Gastrocnemius medialis (tissue), 4 donors: ENCODE measurements at regions of chr7 and their contacts with region 1.

Region 1: DNA sequence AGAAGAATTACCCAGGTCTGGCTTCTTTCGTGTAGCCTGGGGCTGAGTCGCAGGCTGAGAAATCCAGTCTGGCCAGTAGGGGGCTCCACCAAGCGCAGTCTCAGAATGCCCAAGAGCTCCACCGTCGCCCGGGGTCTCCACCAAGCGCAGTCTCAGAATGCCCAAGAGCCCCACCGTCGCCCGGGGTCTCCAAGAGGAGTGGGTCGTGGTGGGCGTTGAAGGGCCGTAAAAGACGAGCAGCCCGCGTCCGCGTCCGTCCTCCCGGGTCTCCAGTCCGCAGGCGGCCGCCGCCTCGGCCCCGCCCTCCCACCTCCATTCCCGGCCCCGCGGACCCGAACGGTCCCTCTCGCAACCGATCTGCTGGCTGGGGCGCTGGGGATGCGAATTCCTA is 895 bp upstream of the ZYX start:
- DNase-seq: peak; percentile 66 to 82
- ATAC-seq: peak; percentile 60 to 63
- H3K4me3 ChIP-seq: peak overlapping the region; percentile 78 to 99 (median 86)
- H3K27ac ChIP-seq: peak overlapping the region; percentile 92 to 100 (median 98)
- H3K4me1 ChIP-seq: peaks cover 44 to 47% of the 10 kb centered on the region in 2 donors
- H3K27me3 ChIP-seq: no peaks in the 10 kb centered on the region
- CTCF ChIP-seq: peak; percentile 89 to 95 (median 91)
- POLR2A ChIP-seq: no peak

Region 2: DNA sequence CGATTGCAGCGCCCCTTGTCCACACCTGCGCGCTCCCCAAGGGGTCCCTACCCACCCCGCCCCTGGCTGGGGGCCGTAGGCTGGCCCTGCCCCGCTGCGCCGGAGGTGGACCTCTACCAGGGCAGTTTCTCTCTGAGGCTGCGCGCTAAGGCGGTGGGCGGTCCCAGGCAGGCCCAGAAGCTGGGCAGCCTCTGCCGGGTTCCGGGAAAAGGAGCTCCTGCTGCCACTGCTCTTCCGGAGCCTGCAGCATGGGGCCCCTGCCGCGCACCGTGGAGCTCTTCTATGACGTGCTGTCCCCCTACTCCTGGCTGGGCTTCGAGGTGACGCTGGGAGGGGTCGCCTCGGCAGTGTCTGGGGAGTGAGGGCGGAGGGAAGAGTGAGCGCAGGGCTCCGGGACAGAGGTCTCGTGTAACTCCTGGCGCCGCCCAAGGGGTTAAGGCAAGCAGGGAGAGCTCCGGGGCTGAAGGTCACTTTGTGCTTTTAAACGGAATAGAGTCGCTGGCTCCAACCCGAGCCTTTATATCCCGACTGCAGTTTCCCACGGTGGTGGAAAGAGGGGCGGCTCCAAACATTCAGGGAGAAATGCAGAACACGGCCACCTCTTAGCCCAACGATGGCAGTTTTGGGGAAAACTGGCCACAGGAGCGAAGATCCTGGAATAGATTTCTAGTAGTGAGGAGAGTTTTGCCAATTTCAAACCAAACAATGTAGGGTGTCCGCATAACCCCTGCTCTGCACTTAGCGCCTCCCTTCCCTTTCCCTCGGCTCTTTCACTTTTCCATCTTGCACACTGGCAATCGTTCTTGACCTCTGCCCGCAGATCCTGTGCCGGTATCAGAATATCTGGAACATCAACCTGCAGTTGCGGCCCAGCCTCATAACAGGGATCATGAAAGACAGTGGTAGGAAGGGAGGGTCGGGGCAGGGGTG is 116.7 kb before region 1 on chr7 and contains the start of gene GSTK1:
- in situ Hi-C with region 1: no loop called
- intact Hi-C with region 1: loop called (anchors 2 kb)
- DNase-seq: peak; percentile 61 to 68
- ATAC-seq: peak; percentile 91 to 92
- H3K4me3 ChIP-seq: peak within 1 kb of the TSS; percentile 74 to 96 (median 82)
- H3K27ac ChIP-seq: peak within 1 kb of the TSS; percentile 80 to 88 (median 87)
- H3K4me1 ChIP-seq: peaks cover 10 to 27% of the 10 kb centered on the region in 2 donors
- H3K27me3 ChIP-seq: no peaks in the 10 kb centered on the region
- CTCF ChIP-seq: no peak
- POLR2A ChIP-seq: peak; percentile 46 to 59
- total RNA-seq, gene GSTK1: 59.5 to 114 (median 85.0) TPM

Region 3: DNA sequence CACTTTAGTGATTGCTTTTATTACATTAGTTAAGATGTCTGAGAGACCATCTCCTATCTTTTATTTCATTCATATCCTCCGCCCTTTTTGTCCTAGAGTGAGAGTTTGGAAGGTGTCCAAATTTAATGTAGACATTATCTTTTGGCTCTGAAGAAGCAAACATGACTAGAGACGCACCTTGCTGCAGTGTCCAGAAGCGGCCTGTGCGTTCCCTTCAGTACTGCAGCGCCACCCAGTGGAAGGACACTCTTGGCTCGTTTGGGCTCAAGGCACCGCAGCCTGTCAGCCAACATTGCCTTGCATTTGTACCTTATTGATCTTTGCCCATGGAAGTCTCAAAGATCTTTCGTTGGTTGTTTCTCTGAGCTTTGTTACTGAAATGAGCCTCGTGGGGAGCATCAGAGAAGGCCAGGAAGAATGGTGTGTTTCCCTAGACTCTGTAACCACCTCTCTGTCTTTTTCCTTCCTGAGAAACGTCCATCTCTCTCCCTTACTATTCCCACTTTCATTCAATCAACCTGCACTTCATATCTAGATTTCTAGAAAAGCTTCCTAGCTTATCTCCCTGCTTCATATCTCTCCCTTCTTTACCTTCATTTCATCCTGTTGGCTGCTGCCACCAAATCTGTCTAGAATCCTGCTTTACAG is 74.7 kb before region 1 on chr7:
- in situ Hi-C with region 1: no loop called
- intact Hi-C with region 1: no loop called
- DNase-seq: peak in 1 of 2 donors; percentile 55
- ATAC-seq: peak; percentile 26 to 84
- H3K4me3 ChIP-seq: no peak overlapping the region
- H3K27ac ChIP-seq: no peak overlapping the region
- H3K4me1 ChIP-seq: peaks cover 15% of the 10 kb centered on the region in 2 donors
- H3K27me3 ChIP-seq: no peaks in the 10 kb centered on the region
- CTCF ChIP-seq: peak; percentile 54 to 74 (median 62)
- POLR2A ChIP-seq: no peak

Region 4: DNA sequence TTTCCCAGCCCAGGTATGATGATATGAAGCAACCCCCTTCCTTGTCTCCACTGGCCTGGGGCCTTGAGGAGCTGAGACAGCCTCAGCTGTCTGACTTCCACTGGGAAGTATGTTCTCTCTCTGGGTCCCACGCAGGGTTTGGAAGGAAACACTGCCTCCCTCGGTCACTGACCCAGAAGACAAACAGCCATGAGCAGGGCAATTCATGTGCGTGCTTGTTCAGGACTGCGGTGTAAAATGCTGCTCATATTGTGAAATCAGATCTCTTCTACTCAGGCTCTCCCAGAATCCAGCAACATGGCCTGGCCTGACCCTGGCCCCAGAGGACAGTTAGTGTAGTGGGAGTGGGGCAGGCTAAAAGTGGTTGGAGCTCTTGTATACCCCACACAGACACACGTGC is 61.6 kb before region 1 on chr7:
- in situ Hi-C with region 1: no loop called
- intact Hi-C with region 1: loop called (anchors 2 kb)
- DNase-seq: peak; percentile 67 to 87
- ATAC-seq: peak; percentile 73 to 85
- H3K4me3 ChIP-seq: no peak overlapping the region
- H3K27ac ChIP-seq: peak overlapping the region; percentile 76 to 99 (median 90)
- H3K4me1 ChIP-seq: peaks cover 44 to 59% of the 10 kb centered on the region in 2 donors
- H3K27me3 ChIP-seq: no peaks in the 10 kb centered on the region
- CTCF ChIP-seq: peak in 3 of 5 experiments; percentile 12 to 36 (median 24)
- POLR2A ChIP-seq: no peak

Region 5: DNA sequence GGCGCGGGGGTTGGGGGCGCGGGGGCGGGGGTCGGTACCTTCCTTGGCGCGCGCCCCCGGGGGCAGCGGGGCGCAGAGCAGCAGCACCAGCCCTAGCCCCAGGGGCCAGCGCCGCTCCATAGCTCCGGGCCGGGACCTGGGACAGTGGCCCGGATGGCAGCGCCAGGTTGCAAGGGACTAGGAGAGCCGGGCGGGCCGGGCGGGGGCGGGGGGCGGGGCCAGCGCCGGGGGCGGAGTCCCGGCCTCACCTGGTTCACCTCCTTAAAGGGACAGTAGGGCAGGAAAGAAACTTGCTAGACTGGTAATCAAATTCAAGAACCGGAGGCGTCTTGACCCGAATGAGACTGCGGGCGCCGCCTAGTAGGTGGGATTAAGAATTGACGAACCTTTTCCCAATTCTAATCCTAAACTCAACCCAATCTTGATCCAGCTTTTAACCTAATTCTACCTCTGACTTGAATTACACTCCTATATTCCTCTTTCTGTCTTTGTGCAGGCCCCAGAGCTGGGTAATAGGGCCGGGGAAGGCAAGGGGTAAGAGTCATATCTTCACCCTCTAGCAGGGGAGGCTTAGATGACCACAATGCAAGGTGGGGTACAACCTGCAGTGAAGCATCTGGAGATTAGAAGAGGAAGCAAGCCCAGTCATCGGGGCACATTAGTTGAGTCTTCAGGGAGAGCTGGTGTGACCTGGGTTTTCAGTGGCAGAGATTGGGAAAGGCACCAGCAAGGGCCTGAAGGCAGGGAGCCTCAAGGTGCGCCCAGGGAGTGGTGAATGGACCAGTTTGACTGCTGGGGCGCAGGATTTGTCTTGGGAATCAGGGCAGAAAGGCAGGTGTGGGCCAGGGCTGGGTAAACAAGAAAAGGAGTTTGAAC is 28.7 kb after region 1 on chr7 and contains the start of gene EPHA1:
- in situ Hi-C with region 1: loop called in 1 of 4 experiments (anchors 5 kb)
- intact Hi-C with region 1: loop called (anchors 2 kb)
- DNase-seq: no peak
- ATAC-seq: no peak
- H3K4me3 ChIP-seq: no peak within 1 kb of the TSS
- H3K27ac ChIP-seq: no peak within 1 kb of the TSS
- H3K4me1 ChIP-seq: no peaks in the 10 kb centered on the region
- H3K27me3 ChIP-seq: no peaks in the 10 kb centered on the region
- CTCF ChIP-seq: no peak
- POLR2A ChIP-seq: no peak
- total RNA-seq, gene EPHA1: not detected

Region 6: GRCh38 chr7:143458263-143458662 is 78.0 kb after region 1 on chr7:
- in situ Hi-C with region 1: no loop called
- intact Hi-C with region 1: no loop called
- DNase-seq: no peak
- ATAC-seq: no peak
- H3K4me3 ChIP-seq: no peak overlapping the region
- H3K27ac ChIP-seq: no peak overlapping the region
- H3K4me1 ChIP-seq: no peaks in the 10 kb centered on the region
- H3K27me3 ChIP-seq: no peaks in the 10 kb centered on the region
- CTCF ChIP-seq: no peak
- POLR2A ChIP-seq: no peak

Region 7: GRCh38 chr7:143901668-143902331 is 521.5 kb after region 1 on chr7 and contains the start of gene TCAF1:
- in situ Hi-C with region 1: no loop called
- intact Hi-C with region 1: loop called (anchors 10 kb)
- DNase-seq: peak; percentile 94
- ATAC-seq: peak; percentile 96 to 97
- H3K4me3 ChIP-seq: peak within 1 kb of the TSS; percentile 80 to 99 (median 94)
- H3K27ac ChIP-seq: peak within 1 kb of the TSS; percentile 86 to 97 (median 94)
- H3K4me1 ChIP-seq: peaks cover 21 to 32% of the 10 kb centered on the region in 2 donors
- H3K27me3 ChIP-seq: no peaks in the 10 kb centered on the region
- CTCF ChIP-seq: peak in 3 of 5 experiments; percentile 20 to 23 (median 21)
- POLR2A ChIP-seq: peak; percentile 65 to 71
- total RNA-seq, gene TCAF1: 31.4 to 43.0 (median 32.9) TPM